Sigmoid colon (tissue), 7 donors: ENCODE measurements at regions of chr15 and their contacts with region 1.

Region 1: DNA sequence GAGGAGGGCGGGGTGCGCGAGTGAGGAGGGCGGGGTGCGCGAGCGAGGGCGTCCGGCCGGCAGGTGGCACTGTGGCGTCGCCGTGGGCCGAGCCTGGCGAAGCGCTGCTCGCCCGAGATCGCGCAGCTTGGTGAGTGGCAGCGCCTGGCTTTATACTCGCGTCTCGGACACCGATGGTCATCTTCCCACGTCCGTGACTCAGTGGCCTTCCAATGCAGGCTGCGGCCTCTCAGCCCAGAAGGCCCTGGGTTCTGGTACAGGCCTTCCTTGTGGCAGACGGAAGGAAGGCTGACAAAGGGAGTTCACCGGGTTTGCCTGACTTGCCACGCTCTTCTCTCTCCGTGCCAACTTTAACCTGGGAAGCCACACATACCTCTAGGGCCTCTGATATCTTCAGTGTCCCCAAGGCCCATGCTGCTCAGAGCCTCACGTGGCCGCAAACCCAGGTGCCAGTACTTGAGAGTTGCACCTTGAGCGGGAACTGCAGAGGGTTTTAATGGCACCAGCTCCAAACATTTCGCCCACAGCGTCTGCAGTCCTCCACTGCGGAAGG is 195.3 kb upstream of the LYSMD4 start:
- DNase-seq: peak; percentile 90
- H3K4me3 ChIP-seq: peak overlapping the region; percentile 22 to 51 (median 36)
- H3K27ac ChIP-seq: peak overlapping the region; percentile 59 to 81 (median 76)
- H3K4me1 ChIP-seq: peaks cover 0 to 11% (median 6%) of the 10 kb centered on the region in 4 donors
- H3K27me3 ChIP-seq: no peaks in the 10 kb centered on the region
- CTCF ChIP-seq: peak; percentile 43 to 70 (median 48)
- EP300 ChIP-seq: no peak
- POLR2A ChIP-seq: no peak

Region 2: GRCh38 chr15:99296386-99296785 is 632.1 kb before region 1 on chr15:
- intact Hi-C with region 1: no loop called
- DNase-seq: no peak
- H3K4me3 ChIP-seq: no peak overlapping the region
- H3K27ac ChIP-seq: peak overlapping the region in 2 of 4 donors; percentile 16 to 46
- H3K4me1 ChIP-seq: peaks cover 0 to 27% (median 18%) of the 10 kb centered on the region in 4 donors
- H3K27me3 ChIP-seq: no peaks in the 10 kb centered on the region
- CTCF ChIP-seq: no peak
- EP300 ChIP-seq: no peak
- POLR2A ChIP-seq: no peak

Region 3: DNA sequence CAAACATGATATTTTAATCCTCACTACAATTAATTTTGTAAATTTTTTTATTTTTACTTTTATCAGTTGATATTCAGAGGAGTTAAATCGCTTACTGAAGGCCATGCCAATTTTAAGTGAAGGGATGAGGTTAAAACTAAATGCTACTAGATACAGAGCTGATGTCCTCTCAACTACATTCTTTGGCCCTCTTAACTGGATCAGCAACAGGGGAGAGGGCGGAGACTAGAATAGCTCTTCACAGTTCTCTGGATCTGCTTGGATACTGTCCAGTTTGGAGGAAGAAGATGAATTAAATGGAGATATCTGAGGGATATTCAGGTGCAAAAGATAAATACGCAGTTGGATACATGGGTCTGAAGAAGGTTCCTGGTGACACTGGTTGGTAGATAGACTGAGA is 109.6 kb before region 1 on chr15:
- intact Hi-C with region 1: loop called (anchors 10 kb)
- DNase-seq: no peak
- H3K4me3 ChIP-seq: no peak overlapping the region
- H3K27ac ChIP-seq: no peak overlapping the region
- H3K4me1 ChIP-seq: no peaks in the 10 kb centered on the region
- H3K27me3 ChIP-seq: no peaks in the 10 kb centered on the region
- CTCF ChIP-seq: no peak
- EP300 ChIP-seq: no peak
- POLR2A ChIP-seq: no peak

Region 4: DNA sequence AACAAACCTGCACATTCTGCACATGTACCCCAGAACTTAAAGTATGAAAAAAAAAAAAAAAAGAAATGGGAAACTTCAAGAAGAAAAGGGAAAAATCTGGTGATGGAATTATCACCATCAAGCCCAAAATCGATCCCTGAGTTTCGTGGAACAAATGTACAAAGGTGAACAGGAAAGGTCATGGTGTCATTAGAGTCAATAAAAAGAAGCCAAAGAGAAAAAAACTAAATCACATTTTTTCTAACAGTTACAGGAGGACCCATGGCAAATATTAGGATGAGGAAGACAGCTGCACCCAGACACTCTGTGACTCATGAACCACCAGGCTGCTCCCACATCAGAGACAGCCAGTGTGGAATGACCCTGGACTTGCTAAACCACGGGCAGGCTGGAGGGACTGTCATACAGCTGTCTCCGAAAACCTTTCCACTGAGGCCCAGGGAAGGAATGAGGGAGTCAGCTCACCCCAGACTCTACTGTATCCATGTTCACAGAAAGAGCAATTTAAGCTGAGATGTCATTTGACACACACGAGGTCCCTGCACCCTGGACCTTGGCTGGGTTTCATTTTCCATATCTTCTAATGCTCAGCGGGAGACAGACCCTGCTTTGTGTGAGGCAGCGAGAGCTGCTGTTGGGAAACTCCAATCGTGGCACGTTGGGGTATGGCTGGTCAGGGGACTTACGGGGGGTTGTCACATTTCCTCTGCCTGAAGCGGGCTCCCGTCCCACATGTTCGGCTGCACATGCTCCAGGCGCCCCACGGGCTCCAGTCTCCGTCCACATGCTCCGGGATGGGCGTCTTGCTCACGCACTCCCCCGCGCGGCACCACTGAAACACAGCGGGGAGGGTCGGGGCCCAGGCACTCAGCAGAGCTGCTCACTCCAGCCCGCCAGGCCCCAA is 203.1 kb after region 1 on chr15:
- intact Hi-C with region 1: loop called (anchors 5 kb)
- DNase-seq: no peak
- H3K4me3 ChIP-seq: peak overlapping the region in 3 of 4 donors; percentile 18 to 25 (median 19)
- H3K27ac ChIP-seq: peak overlapping the region in 1 of 4 donors; percentile 17
- H3K4me1 ChIP-seq: peaks cover 0 to 3% (median 1%) of the 10 kb centered on the region in 4 donors
- H3K27me3 ChIP-seq: no peaks in the 10 kb centered on the region
- CTCF ChIP-seq: peak in 2 of 4 experiments; percentile 20 to 32
- EP300 ChIP-seq: no peak
- POLR2A ChIP-seq: no peak

Region 5: DNA sequence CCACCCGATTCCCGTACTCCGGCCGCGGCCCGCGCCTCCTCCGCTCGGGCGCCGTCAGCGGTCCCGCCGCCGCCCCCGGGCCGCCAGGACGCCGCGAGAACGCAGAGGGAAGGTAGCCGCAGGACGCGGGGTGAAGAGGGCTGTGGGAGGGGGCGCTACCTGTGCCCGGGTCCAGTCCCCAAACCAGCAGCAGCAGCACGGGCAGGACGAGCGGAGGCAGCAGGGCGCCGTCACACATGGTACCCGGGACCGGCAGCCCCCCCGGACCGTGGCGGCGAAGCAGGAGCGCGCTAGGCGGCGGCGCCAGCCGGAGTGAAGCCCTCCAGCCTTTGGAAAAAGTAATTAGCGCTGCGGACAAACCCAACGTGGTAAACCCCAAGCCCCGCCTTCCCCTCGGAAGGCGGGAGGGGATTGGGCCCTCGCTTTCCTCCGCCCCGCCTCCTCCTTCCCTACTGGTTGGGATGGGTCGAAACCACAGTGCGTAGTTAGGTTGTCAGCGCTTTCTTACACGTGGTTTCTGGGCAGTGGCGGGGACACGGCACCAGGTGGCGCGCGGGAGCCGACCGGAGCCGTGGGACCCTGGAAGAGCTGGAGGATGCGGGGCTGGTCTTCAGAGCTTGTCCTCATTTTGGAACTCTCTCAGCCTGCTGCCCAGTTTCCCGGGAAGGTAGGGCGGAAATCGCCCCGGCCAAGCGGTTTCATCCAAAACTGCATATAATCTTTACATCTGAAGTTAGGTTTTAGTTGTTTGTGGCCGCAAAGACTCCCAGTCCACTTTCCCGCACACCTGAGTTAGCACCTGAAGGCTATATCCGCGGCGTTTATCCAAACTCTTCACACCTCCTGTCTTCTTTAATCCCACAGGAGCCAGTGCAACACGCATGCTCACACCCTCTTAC is 413.4 kb after region 1 on chr15 and contains the start of gene ADAMTS17:
- intact Hi-C with region 1: loop called (anchors 2 kb)
- DNase-seq: peak; percentile 98
- H3K4me3 ChIP-seq: peak within 1 kb of the TSS; percentile 51 to 86 (median 78)
- H3K27ac ChIP-seq: peak within 1 kb of the TSS; percentile 69 to 87 (median 80)
- H3K4me1 ChIP-seq: peaks cover 0 to 23% (median 11%) of the 10 kb centered on the region in 4 donors
- H3K27me3 ChIP-seq: peaks cover 5 to 9% (median 8%) of the 10 kb centered on the region in 3 donors
- CTCF ChIP-seq: peak; percentile 88 to 94 (median 92)
- EP300 ChIP-seq: no peak
- POLR2A ChIP-seq: peak; percentile 33 to 73
- total RNA-seq, gene ADAMTS17: 0.71 to 3.6 (median 1.3) TPM

Region 6: GRCh38 chr15:100572362-100572983 is 644.0 kb after region 1 on chr15:
- intact Hi-C with region 1: loop called (anchors 5 kb)
- DNase-seq: no peak
- H3K4me3 ChIP-seq: no peak overlapping the region
- H3K27ac ChIP-seq: no peak overlapping the region
- H3K4me1 ChIP-seq: no peaks in the 10 kb centered on the region
- H3K27me3 ChIP-seq: no peaks in the 10 kb centered on the region
- CTCF ChIP-seq: peak; percentile 30 to 58 (median 42)
- EP300 ChIP-seq: no peak
- POLR2A ChIP-seq: no peak

Region 7: GRCh38 chr15:100602064-100602822 is 673.7 kb after region 1 on chr15 and contains the starts of genes ASB7 and LINS1:
- intact Hi-C with region 1: loop called (anchors 10 kb)
- DNase-seq: peak; percentile 100
- H3K4me3 ChIP-seq: peak within 1 kb of the TSS; percentile 78 to 95 (median 89)
- H3K27ac ChIP-seq: peak within 1 kb of the TSS; percentile 86 to 92 (median 88)
- H3K4me1 ChIP-seq: peaks cover 0 to 40% (median 33%) of the 10 kb centered on the region in 4 donors
- H3K27me3 ChIP-seq: no peaks in the 10 kb centered on the region
- CTCF ChIP-seq: no peak
- EP300 ChIP-seq: peak in 1 of 4 donors; percentile 17
- POLR2A ChIP-seq: peak in 1 of 2 donors; percentile 10
- total RNA-seq, gene ASB7: 7.2 to 13.8 (median 12.0) TPM
- total RNA-seq, gene LINS1: 13.6 to 74.8 (median 40.1) TPM

Region 8: DNA sequence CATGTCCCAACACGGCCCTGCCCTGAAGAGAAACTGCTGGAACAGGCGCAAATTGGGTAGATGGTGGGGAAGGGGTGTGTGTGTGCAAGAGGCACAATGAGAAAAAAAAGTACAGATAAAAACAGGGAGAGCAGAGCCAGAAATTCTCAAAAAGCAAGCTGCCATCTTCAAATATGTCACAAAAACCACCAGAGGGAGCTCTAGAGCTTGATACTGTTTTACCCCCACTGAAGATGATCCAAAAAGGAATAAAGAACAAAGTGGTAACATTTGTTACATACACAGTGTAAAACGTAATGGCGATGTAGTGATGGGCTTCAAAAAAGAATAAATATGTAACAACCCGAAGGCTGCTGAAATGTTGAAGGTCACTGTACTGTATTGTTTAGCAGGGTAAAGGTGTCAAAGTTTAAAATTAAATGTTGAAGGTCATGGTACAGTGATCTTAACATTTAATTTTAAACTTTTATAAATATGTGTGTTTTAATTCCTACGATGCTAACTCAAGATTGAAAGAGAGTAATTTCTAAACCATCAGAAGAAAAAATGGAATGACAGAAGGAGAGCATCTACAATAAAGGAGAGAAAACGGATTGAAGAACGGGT is 1360.5 kb after region 1 on chr15:
- intact Hi-C with region 1: no loop called
- DNase-seq: no peak
- H3K4me3 ChIP-seq: no peak overlapping the region
- H3K27ac ChIP-seq: no peak overlapping the region
- H3K4me1 ChIP-seq: peaks cover 0 to 26% (median 24%) of the 10 kb centered on the region in 4 donors
- H3K27me3 ChIP-seq: no peaks in the 10 kb centered on the region
- CTCF ChIP-seq: peak in 3 of 4 experiments; percentile 41 to 50 (median 48)
- EP300 ChIP-seq: no peak
- POLR2A ChIP-seq: no peak